RWPE1 (cell line): ENCODE measurements at regions of chr16 and their contacts with region 1.

Region 1: GRCh38 chr16:15792559-15792971 is 64.3 kb downstream of the MYH11 start:
- DNase-seq: no peak
- H3K27ac ChIP-seq: no peak overlapping the region
- CTCF ChIP-seq: no peak

Region 2: GRCh38 chr16:15847611-15848175 is 55.1 kb after region 1 on chr16:
- CTCF ChIA-PET with region 1: interaction called, 10 read pairs
- POLR2A ChIA-PET with region 1: no interaction called
- DNase-seq: no peak
- H3K27ac ChIP-seq: no peak overlapping the region
- CTCF ChIP-seq: no peak